ENCODE measurements at regions of chr1 and their contacts with region 1.

Region 1: GRCh38 chr1:66563094-66563800 is 29.3 kb downstream of the SGIP1 start:
- DNase-seq: peak; percentile 30
- H3K4me3 ChIP-seq: no peak overlapping the region
- H3K27ac ChIP-seq: peak overlapping the region; percentile 73
- H3K4me1 ChIP-seq: peaks cover 26% of the 10 kb centered on the region
- H3K27me3 ChIP-seq: no peaks in the 10 kb centered on the region
- CTCF ChIP-seq: no peak

Region 2: DNA sequence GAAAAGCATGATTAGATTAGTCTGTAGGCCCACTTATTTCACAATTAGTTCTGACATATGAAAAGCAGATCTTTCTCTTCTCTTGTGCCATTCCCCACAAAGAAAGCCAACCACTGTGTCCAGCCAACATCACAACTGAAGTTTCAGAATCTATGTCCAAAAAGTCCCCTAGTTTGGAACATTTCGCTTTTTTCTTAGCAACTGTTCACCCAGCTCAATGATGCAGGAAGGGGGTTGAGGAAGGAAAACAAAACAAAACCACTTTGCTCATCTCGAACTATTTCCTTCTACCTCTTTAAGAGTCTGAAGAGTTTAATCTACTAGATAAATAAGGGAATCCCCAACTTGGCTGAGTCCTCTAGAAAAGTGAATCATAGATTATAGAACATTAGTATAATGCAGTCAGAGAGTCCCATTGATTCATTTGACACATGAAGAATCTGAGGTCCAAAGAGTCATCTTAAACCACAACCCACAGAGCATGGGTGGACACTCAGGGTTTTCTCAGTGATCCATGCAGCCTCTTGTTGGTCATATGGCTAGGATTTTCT is 188.6 kb before region 1 on chr1:
- CTCF ChIA-PET with region 1: no interaction called
- dilution Hi-C with region 1: no loop called
- in situ Hi-C with region 1: no loop called
- intact Hi-C with region 1: no loop called
- DNase-seq: peak; percentile 90
- H3K4me3 ChIP-seq: no peak overlapping the region
- H3K27ac ChIP-seq: no peak overlapping the region
- H3K4me1 ChIP-seq: no peaks in the 10 kb centered on the region
- H3K27me3 ChIP-seq: no peaks in the 10 kb centered on the region
- CTCF ChIP-seq: no peak

Region 3: GRCh38 chr1:66464802-66465201 is 98.4 kb before region 1 on chr1:
- CTCF ChIA-PET with region 1: no interaction called
- dilution Hi-C with region 1: no loop called
- in situ Hi-C with region 1: no loop called
- intact Hi-C with region 1: loop called (anchors 10 kb)
- DNase-seq: peak; percentile 93
- H3K4me3 ChIP-seq: no peak overlapping the region
- H3K27ac ChIP-seq: peak overlapping the region; percentile 57
- H3K4me1 ChIP-seq: peaks cover 12% of the 10 kb centered on the region
- H3K27me3 ChIP-seq: no peaks in the 10 kb centered on the region
- CTCF ChIP-seq: no peak

Region 4: DNA sequence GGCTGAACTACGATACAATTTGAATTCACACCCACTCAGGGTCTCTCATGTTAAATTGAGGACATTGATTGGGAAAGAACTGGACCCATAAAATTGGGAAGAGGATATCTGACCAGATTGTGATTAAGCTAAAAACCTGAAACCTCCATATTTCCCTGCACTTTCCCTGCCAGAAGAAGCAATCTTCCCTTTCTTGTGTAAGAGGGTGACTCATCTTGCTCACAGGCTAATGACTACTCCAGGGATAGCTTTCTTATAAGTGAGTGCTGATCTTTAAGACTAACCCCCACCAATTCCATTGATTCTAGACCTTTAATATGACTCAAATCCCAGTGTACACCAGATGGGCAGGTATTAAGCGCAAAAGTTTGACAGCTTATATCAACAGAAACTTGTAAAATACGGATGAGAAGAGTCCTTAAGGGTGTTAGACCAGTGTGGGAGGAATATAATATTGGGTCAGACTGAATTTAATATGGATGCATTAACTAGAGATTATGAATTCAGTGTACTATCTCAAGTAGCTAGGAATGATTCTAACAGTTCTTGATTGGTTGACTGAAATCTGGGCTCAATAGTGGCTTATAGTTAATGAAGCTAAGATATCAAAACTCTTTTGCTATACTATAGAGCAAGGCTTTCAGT is 41.4 kb before region 1 on chr1:
- CTCF ChIA-PET with region 1: no interaction called
- dilution Hi-C with region 1: no loop called
- in situ Hi-C with region 1: no loop called
- intact Hi-C with region 1: loop called (anchors 5 kb)
- DNase-seq: peak; percentile 84
- H3K4me3 ChIP-seq: no peak overlapping the region
- H3K27ac ChIP-seq: no peak overlapping the region
- H3K4me1 ChIP-seq: peaks cover 8% of the 10 kb centered on the region
- H3K27me3 ChIP-seq: no peaks in the 10 kb centered on the region
- CTCF ChIP-seq: no peak

Region 5: DNA sequence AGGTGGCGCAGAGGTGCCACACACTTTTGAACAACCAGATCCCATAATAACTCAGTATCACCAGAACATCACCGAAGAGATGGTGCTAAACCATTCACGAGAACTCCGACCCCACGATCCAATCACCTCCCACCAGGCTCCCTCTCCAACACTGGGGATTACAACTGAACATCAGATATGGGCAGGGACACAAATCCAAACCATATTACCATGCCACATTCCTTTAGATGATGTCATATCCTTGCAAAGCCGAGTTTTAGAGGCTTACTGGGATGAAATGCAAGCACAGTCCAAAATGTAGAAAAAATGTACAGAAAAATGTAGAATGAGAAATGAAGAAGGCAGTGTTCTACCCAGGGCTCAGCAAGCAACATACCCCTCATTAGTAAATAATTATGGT is 35.4 kb after region 1 on chr1:
- CTCF ChIA-PET with region 1: no interaction called
- dilution Hi-C with region 1: no loop called
- in situ Hi-C with region 1: no loop called
- intact Hi-C with region 1: loop called (anchors 1 kb)
- DNase-seq: peak; percentile 32
- H3K4me3 ChIP-seq: no peak overlapping the region
- H3K27ac ChIP-seq: no peak overlapping the region
- H3K4me1 ChIP-seq: peaks cover 11% of the 10 kb centered on the region
- H3K27me3 ChIP-seq: no peaks in the 10 kb centered on the region
- CTCF ChIP-seq: no peak

Region 6: DNA sequence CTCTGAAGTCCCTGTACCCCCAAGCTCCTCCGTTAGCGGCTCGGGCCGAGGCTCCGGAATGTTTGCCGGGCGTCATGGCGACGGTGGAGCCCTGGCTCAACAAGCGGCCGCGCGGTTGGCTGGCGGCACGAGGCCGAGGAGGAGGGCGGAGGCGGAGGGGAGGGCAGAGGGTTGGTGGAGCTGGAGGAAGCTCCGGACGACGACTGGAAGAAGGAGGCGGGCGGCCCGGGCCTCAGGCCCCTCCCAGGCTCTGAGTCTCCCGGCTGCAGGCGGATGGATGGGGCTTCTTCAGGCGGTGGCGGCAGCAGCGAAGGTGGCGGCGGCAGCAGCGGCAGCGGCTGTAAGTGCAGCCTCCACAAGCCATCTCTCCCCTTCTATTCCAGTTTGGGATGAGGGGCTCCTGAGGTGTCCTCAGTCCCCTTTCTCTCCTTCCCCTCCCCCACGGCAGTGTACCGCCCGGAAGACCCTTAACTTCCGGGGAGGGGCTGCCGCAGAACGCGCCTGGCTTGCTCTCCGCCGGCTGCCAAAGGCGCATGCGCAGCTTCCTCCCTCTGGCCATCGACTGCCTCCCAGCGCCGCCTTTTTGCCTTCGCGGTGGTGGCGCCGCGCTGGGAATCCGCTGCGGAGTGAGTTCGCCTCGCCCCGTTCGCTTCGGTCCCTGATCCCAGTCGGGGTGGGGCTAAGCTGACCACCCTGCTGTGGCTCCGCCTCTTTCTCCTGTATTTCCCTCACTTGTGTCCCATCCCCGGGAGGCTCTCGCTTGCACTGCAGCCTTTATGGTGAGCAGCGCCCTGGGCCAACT is 361.7 kb after region 1 on chr1 and contains the starts of genes DNAI4 and MIER1:
- CTCF ChIA-PET with region 1: no interaction called
- dilution Hi-C with region 1: no loop called
- in situ Hi-C with region 1: no loop called
- intact Hi-C with region 1: loop called (anchors 10 kb)
- DNase-seq: peak; percentile 99
- H3K4me3 ChIP-seq: peak within 1 kb of the TSS; percentile 65 to 99 (median 86)
- H3K27ac ChIP-seq: peak within 1 kb of the TSS; percentile 99
- H3K4me1 ChIP-seq: peaks cover 15% of the 10 kb centered on the region
- H3K27me3 ChIP-seq: no peaks in the 10 kb centered on the region
- CTCF ChIP-seq: peak in 1 of 2 donors; percentile 33
- total RNA-seq, gene DNAI4: 2.9 to 6.0 TPM
- total RNA-seq, gene MIER1: 33.0 to 35.7 TPM

Measured in mammary epithelial cell (primary cell).